ENCODE measurements at regions of chr2 and their contacts with region 1.

Region 1: GRCh38 chr2:219149667-219150066 is 10.9 kb downstream of the NHEJ1 start:
- DNase-seq: no peak
- ATAC-seq: peak; percentile 58
- H3K4me3 ChIP-seq: no peak overlapping the region
- H3K27ac ChIP-seq: no peak overlapping the region
- H3K4me1 ChIP-seq: 0 out of 2 replicates have a peak, but pooled peaks cover 2% of the 10 kb centered on the region
- H3K27me3 ChIP-seq: no peaks in the 10 kb centered on the region
- CTCF ChIP-seq: no peak
- POLR2A ChIP-seq: no peak
- RAD21 ChIP-seq: no peak

Region 2: DNA sequence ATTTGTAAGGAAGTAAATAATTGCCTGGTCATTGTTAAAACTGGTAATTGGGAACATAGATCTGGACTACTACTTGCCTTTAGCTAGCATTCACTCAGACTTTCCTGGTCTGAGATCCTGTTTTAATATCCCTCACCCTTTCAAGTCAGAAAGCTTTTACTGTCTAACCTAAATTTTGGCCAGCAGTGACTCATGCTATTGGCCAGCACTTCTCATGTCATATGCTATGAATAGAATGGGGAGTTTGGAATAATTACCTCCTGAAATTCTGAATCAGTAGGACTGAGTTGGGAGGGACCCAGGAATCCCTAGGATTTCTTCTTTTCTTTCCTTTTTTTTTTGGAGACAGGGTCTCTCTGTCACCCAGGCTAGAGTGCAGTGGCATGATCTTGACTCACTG is 458.4 kb before region 1 on chr2:
- CTCF ChIA-PET with region 1: no interaction called
- POLR2A ChIA-PET with region 1: no interaction called
- dilution Hi-C with region 1: no loop called
- in situ Hi-C with region 1: no loop called
- intact Hi-C with region 1: no loop called
- DNase-seq: peak; percentile 66
- ATAC-seq: peak; percentile 50; the same call in 1 of the 2 replicates
- H3K4me3 ChIP-seq: no peak overlapping the region
- H3K27ac ChIP-seq: no peak overlapping the region
- H3K4me1 ChIP-seq: peaks cover 3% of the 10 kb centered on the region; the same call in 1 of the 2 replicates
- H3K27me3 ChIP-seq: no peaks in the 10 kb centered on the region
- CTCF ChIP-seq: no peak
- POLR2A ChIP-seq: no peak
- RAD21 ChIP-seq: no peak

Region 3: GRCh38 chr2:219029829-219030165 is 119.9 kb before region 1 on chr2:
- CTCF ChIA-PET with region 1: interaction called, 17 read pairs
- POLR2A ChIA-PET with region 1: no interaction called
- dilution Hi-C with region 1: no loop called
- in situ Hi-C with region 1: loop called (anchors 5 kb)
- intact Hi-C with region 1: no loop called
- DNase-seq: peak; percentile 63
- ATAC-seq: peak; percentile 100
- H3K4me3 ChIP-seq: no peak overlapping the region
- H3K27ac ChIP-seq: no peak overlapping the region
- H3K4me1 ChIP-seq: no peaks in the 10 kb centered on the region
- H3K27me3 ChIP-seq: peaks cover 48% of the 10 kb centered on the region
- CTCF ChIP-seq: peak; percentile 91
- POLR2A ChIP-seq: no peak
- RAD21 ChIP-seq: peak; percentile 87

Region 4: GRCh38 chr2:219057709-219058540 is 91.7 kb before region 1 on chr2:
- CTCF ChIA-PET with region 1: interaction called, 12 read pairs
- POLR2A ChIA-PET with region 1: no interaction called
- dilution Hi-C with region 1: no loop called
- in situ Hi-C with region 1: loop called (anchors 5 kb)
- intact Hi-C with region 1: no loop called
- DNase-seq: peak; percentile 56
- ATAC-seq: peak; percentile 97
- H3K4me3 ChIP-seq: no peak overlapping the region
- H3K27ac ChIP-seq: no peak overlapping the region
- H3K4me1 ChIP-seq: peaks cover 6% of the 10 kb centered on the region; the same call in 1 of the 2 replicates
- H3K27me3 ChIP-seq: peaks cover 91% of the 10 kb centered on the region
- CTCF ChIP-seq: peak; percentile 93
- POLR2A ChIP-seq: no peak
- RAD21 ChIP-seq: peak; percentile 96